RWPE1 (cell line): ENCODE measurements at regions of chr12 and their contacts with region 1.

Region 1: DNA sequence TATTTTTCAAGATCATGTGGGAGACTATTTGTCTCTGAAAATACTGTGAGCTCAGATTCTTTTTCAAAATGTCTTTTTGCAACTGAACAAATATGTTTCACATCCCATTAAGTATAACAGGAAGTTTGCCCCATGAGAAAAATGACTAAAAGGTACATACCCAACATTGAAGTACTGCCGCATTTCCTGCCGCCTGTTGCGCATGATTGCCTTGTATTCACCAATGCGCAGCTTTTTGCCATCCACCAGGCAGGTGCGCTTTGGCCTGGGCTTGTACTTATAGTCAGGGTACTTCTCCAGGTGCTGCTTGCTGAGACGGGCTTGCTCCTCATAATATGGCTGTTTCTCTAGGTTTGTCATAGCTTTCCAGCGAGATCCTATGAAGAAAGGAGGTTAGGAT is 413.2 kb downstream of the SOX5 start:
- DNase-seq: no peak
- H3K27ac ChIP-seq: no peak overlapping the region
- CTCF ChIP-seq: no peak

Region 2: GRCh38 chr12:23337213-23337612 is 199.1 kb before region 1 on chr12:
- CTCF ChIA-PET with region 1: no interaction called
- POLR2A ChIA-PET with region 1: no interaction called
- DNase-seq: no peak
- H3K27ac ChIP-seq: no peak overlapping the region
- CTCF ChIP-seq: no peak

Region 3: GRCh38 chr12:23617749-23618148 is 81.5 kb after region 1 on chr12:
- CTCF ChIA-PET with region 1: interaction called, 10 read pairs
- POLR2A ChIA-PET with region 1: no interaction called
- DNase-seq: no peak
- H3K27ac ChIP-seq: no peak overlapping the region
- CTCF ChIP-seq: no peak